Activated CD4-positive, alpha-beta memory T cell treated with anti-CD3 and anti-CD28 coated beads, Interleukin-2, amount 10 ng/mL, durations not matched to agents 7 days and 5 days (primary cell): ENCODE measurements at regions of chr11 and their contacts with region 1.

Region 1: GRCh38 chr11:133134314-133135173 is 397.8 kb downstream of the OPCML start:
- DNase-seq: peak; percentile 50
- H3K4me3 Mint-ChIP-seq: no peak overlapping the region
- H3K27ac Mint-ChIP-seq: no peak overlapping the region
- H3K4me1 Mint-ChIP-seq: no peaks in the 10 kb centered on the region
- H3K27me3 Mint-ChIP-seq: peaks cover 1% of the 10 kb centered on the region

Region 2: DNA sequence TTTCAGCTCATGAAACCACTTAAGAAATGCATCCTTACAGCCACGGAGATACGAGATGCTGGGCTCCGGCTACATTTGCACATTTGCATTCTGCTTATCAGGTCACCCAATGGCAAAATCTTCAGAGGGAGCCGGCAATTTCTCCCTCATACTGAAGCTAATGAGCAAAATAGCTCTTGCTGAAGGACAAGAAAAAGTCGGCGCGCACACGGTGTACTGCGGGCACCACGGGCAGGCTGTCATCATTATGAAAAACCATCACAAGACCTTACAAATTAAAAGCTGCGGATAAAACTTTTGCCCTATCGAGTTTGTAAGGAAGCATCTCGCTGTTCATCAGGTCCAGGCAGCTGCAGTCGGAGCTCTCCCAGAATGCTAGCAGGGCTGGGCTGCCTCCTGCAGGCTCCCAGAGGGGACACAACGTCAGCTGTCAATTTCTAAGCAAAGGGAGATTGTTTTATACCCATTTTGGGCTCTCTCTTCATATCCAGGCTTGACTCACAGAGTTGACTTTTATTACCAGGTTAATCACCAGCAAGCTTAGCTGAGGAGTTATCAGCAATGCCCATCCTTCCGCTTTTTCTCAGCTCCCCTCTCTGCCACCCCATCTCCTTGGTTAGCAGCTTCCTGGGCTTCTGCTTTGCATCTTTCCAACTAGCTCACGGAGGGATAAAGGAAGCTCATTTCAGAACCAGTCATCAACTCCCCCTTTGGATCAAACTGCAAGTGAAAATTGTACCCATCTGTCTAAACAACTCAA is 22.6 kb after region 1 on chr11:
- CTCF ChIA-PET with region 1: interaction called, 12 read pairs
- POLR2A ChIA-PET with region 1: no interaction called
- DNase-seq: no peak
- H3K4me3 Mint-ChIP-seq: no peak overlapping the region
- H3K27ac Mint-ChIP-seq: no peak overlapping the region
- H3K4me1 Mint-ChIP-seq: no peaks in the 10 kb centered on the region
- H3K27me3 Mint-ChIP-seq: no peaks in the 10 kb centered on the region

Region 3: DNA sequence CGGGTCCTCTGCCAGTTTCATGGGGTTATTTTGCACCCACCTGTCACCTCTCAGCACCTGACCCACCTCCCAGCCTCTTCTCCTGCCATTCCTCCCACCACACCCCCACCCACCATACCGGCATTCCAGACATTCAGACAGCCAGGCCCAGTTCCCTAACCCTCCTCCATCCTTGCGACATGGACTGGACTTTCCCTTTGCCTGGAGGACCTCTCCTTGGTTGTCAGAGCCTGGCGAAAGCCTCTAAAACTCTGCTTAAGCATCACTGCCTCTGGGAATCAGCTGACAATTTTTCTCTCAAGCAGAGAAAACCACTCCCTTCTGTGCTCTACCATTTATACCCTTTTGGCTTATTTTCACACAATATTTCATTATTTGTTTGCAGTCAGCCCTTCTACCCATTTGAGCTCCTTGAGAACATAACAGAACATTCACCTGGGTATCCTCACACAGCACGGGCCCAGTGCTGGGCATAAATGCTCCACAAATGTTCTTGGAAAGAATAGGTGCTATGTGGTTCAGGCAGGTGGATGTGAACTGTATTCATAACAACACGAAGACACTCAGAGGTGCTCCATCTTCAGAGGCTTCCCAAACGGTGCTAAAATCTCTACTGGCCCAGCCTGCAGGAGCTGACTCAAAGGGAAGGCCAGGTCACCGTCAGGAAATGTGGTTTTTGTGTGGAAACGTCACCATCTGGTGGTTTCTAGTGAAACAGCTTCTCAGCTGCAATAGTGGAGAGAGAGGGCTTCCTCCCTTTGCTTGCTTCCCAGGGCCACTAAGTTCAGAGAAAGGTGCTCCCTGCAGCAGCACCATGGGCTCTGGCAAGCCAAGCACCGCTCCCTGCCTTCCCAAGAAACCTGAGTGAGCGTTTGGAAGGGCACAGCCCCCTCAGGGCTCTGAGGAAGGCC is 700.4 kb after region 1 on chr11:
- CTCF ChIA-PET with region 1: interaction called, 52 read pairs
- POLR2A ChIA-PET with region 1: no interaction called
- DNase-seq: peak; percentile 66
- H3K4me3 Mint-ChIP-seq: no peak overlapping the region
- H3K27ac Mint-ChIP-seq: no peak overlapping the region
- H3K4me1 Mint-ChIP-seq: peaks cover 17% of the 10 kb centered on the region
- H3K27me3 Mint-ChIP-seq: no peaks in the 10 kb centered on the region